Activated CD4-positive, alpha-beta memory T cell treated with anti-CD3 and anti-CD28 coated beads for 36 hours (primary cell): ENCODE measurements at regions of chr17 and their contacts with region 1.

Region 1: GRCh38 chr17:80008383-80008840 is 27.3 kb downstream of the TBC1D16 start:
- DNase-seq: peak; percentile 86
- H3K4me3 Mint-ChIP-seq: no peak overlapping the region
- H3K27ac Mint-ChIP-seq: no peak overlapping the region
- H3K4me1 Mint-ChIP-seq: peaks cover 5% of the 10 kb centered on the region
- H3K27me3 Mint-ChIP-seq: no peaks in the 10 kb centered on the region

Region 2: GRCh38 chr17:79991140-79991923 is 17.1 kb before region 1 on chr17:
- CTCF ChIA-PET with region 1: interaction called, 37 read pairs
- POLR2A ChIA-PET with region 1: no interaction called
- intact Hi-C with region 1: no loop called
- DNase-seq: peak; percentile 91
- H3K4me3 Mint-ChIP-seq: peak overlapping the region; percentile 71
- H3K27ac Mint-ChIP-seq: no peak overlapping the region
- H3K4me1 Mint-ChIP-seq: peaks cover 26% of the 10 kb centered on the region
- H3K27me3 Mint-ChIP-seq: no peaks in the 10 kb centered on the region

Region 3: DNA sequence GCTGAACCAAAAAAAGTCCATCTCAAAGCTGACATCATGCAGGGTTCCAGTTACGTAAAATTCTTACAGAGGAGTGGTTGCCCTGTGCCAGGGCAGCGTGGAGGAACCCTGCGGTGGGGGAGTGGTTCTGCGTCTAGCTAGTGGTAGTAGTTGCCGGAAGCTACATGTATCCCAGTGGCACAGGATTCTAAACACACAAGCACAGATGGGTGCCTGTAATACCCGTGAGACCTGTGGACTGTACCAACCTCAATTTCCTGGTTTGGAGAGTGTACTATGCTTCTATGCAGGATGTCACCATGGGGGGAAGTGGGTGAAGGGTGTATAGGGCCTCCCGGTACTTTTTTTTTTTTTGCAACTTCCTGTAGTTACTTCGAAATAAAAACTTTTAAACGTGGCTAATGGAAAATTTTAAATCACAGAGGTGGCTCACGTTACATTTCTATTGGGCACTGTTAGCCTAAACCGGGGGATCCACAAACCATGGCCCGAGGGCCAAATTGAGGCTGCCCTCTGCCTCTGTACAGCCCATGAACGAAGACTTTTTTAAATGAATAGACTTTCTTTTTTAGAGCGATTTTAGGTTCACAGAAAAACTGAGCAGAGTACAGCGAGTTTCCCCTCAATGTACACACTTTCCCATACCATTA is 11.3 kb before region 1 on chr17:
- CTCF ChIA-PET with region 1: interaction called, 37 read pairs
- POLR2A ChIA-PET with region 1: no interaction called
- intact Hi-C with region 1: no loop called
- DNase-seq: peak; percentile 88
- H3K4me3 Mint-ChIP-seq: peak overlapping the region; percentile 48
- H3K27ac Mint-ChIP-seq: peak overlapping the region; percentile 90
- H3K4me1 Mint-ChIP-seq: peaks cover 42% of the 10 kb centered on the region
- H3K27me3 Mint-ChIP-seq: no peaks in the 10 kb centered on the region

Region 4: GRCh38 chr17:80023481-80024205 is 15.2 kb after region 1 on chr17:
- CTCF ChIA-PET with region 1: interaction called, 18 read pairs
- POLR2A ChIA-PET with region 1: no interaction called
- intact Hi-C with region 1: no loop called
- DNase-seq: no peak
- H3K4me3 Mint-ChIP-seq: no peak overlapping the region
- H3K27ac Mint-ChIP-seq: no peak overlapping the region
- H3K4me1 Mint-ChIP-seq: no peaks in the 10 kb centered on the region
- H3K27me3 Mint-ChIP-seq: no peaks in the 10 kb centered on the region

Region 5: GRCh38 chr17:80029258-80029974 is 21.0 kb after region 1 on chr17:
- CTCF ChIA-PET with region 1: interaction called, 19 read pairs
- POLR2A ChIA-PET with region 1: no interaction called
- intact Hi-C with region 1: no loop called
- DNase-seq: peak; percentile 15
- H3K4me3 Mint-ChIP-seq: no peak overlapping the region
- H3K27ac Mint-ChIP-seq: no peak overlapping the region
- H3K4me1 Mint-ChIP-seq: no peaks in the 10 kb centered on the region
- H3K27me3 Mint-ChIP-seq: peaks cover 2% of the 10 kb centered on the region

Region 6: DNA sequence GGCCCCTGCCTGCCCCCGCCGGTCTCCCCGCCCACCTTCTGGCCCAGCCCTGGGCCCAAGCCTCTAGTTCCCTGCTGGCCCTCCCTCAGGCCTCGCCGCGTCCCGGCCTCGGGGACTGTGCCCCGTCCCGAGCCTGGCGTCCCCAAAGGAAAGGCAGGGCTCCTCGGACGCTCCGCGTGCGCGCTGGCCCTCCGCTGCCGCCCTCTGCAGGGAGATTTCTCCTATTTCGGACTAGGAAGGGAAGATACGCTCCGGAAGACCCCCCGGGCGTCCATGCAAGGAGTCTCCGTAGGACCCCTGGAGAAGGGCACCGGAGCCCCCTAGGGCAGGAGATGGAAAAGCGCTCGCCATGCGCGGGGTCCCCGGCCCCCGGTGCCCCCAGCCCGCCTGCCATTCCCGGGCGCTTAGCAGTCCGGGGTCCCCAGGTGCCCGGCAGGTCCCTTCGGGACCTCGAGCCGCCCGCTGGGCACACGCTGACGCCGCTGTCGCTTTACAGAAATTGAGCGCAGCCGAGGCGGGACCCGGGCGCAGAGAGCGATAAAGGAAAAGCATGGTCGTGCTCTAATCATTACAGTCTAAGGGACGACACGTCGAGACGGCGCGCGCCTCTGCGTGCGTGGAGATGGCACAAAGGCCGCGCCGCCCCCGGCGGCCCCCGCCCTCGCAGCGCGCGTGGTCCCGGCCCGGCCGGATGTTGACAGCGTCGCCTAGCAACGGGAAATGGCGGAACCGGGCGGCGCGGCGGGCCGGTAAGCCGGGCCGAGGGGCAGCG is 27.7 kb after region 1 on chr17 and contains the start of gene CCDC40:
- CTCF ChIA-PET with region 1: interaction called, 19 read pairs
- POLR2A ChIA-PET with region 1: no interaction called
- intact Hi-C with region 1: no loop called
- DNase-seq: peak; percentile 80
- H3K4me3 Mint-ChIP-seq: peak within 1 kb of the TSS; percentile 80
- H3K27ac Mint-ChIP-seq: no peak within 1 kb of the TSS
- H3K4me1 Mint-ChIP-seq: peaks cover 8% of the 10 kb centered on the region
- H3K27me3 Mint-ChIP-seq: peaks cover 7% of the 10 kb centered on the region
- total RNA-seq, gene CCDC40: 0.82 to 1.00 TPM